ENCODE measurements at regions of chr16 and their contacts with region 1.

Region 1: GRCh38 chr16:74438492-74439041 is 17.3 kb upstream of the CLEC18B start:
- DNase-seq: peak; percentile 37
- H3K4me3 ChIP-seq: no peak overlapping the region
- H3K27ac ChIP-seq: no peak overlapping the region
- H3K4me1 ChIP-seq: peaks cover 10% of the 10 kb centered on the region
- H3K27me3 ChIP-seq: no peaks in the 10 kb centered on the region
- CTCF ChIP-seq: no peak
- POLR2A ChIP-seq: no peak

Region 2: DNA sequence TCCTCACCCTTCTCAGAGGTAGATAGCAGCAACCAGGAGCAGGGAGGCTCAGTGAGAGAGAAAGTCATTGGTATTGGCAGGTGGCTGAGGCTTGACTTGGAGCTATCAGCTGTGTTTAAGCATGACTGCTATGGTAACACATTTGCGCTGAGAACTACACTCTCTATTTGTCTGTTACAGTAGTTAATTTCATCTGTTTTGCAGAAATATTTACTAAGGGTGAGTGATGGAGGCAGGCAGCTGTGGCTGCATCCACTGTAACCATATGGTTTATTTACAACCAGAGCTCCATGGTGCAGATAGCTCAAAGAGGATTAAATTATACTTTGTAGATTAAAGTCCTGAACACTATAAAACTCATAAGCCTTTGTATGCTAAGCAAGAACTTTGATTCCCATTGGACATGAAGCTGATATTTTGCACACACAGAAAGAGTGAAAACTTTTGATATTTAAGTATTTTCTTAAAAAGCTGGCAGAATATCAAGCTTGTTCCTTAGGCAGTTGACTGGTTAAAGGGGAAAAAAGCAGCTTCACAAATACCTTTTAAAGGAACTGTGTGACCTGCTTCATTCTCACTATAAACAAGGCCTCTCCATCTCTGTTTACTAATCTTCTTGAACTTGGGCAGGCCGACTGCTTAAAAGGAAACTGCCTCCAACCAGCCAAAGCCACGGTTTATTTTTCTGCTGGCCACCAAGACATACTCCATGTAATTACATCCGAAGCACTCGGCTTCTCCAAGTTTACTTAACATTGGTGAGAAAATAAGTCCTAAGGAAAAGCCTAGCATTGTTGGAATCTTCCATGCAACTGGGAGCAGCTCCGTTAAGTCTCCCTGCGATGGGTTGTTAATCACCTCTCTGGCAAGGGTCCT is 1090.8 kb before region 1 on chr16:
- CTCF ChIA-PET with region 1: no interaction called
- POLR2A ChIA-PET with region 1: no interaction called
- dilution Hi-C with region 1: no loop called
- intact Hi-C with region 1: no loop called
- DNase-seq: no peak
- H3K4me3 ChIP-seq: no peak overlapping the region
- H3K27ac ChIP-seq: no peak overlapping the region
- H3K4me1 ChIP-seq: no peaks in the 10 kb centered on the region
- H3K27me3 ChIP-seq: no peaks in the 10 kb centered on the region
- CTCF ChIP-seq: no peak
- POLR2A ChIP-seq: no peak

Region 3: GRCh38 chr16:74451951-74452758 is 13.6 kb after region 1 on chr16:
- CTCF ChIA-PET with region 1: interaction called, 11 read pairs
- POLR2A ChIA-PET with region 1: no interaction called
- dilution Hi-C with region 1: no loop called
- intact Hi-C with region 1: no loop called
- DNase-seq: peak; percentile 26
- H3K4me3 ChIP-seq: no peak overlapping the region
- H3K27ac ChIP-seq: peak overlapping the region; percentile 54
- H3K4me1 ChIP-seq: peaks cover 47% of the 10 kb centered on the region
- H3K27me3 ChIP-seq: no peaks in the 10 kb centered on the region
- CTCF ChIP-seq: no peak
- POLR2A ChIP-seq: no peak

Region 4: GRCh38 chr16:74521691-74522090 is 83.1 kb after region 1 on chr16:
- CTCF ChIA-PET with region 1: no interaction called
- POLR2A ChIA-PET with region 1: no interaction called
- dilution Hi-C with region 1: no loop called
- intact Hi-C with region 1: no loop called
- DNase-seq: no peak
- H3K4me3 ChIP-seq: no peak overlapping the region
- H3K27ac ChIP-seq: no peak overlapping the region
- H3K4me1 ChIP-seq: no peaks in the 10 kb centered on the region
- H3K27me3 ChIP-seq: no peaks in the 10 kb centered on the region
- CTCF ChIP-seq: no peak
- POLR2A ChIP-seq: no peak